Activated T-helper 2 cell treated with anti-CD3 and anti-CD28 coated beads, Interferon-gamma antibody, Interleukin-2, Interleukin-4, amounts not matched to agents 10 μg/mL and 5 μg/mL and 100 μg/mL, durations not matched to agents 14 hours and 24 hours and 36 hours (primary cell): ENCODE measurements at regions of chr18 and their contacts with region 1.

Region 1: DNA sequence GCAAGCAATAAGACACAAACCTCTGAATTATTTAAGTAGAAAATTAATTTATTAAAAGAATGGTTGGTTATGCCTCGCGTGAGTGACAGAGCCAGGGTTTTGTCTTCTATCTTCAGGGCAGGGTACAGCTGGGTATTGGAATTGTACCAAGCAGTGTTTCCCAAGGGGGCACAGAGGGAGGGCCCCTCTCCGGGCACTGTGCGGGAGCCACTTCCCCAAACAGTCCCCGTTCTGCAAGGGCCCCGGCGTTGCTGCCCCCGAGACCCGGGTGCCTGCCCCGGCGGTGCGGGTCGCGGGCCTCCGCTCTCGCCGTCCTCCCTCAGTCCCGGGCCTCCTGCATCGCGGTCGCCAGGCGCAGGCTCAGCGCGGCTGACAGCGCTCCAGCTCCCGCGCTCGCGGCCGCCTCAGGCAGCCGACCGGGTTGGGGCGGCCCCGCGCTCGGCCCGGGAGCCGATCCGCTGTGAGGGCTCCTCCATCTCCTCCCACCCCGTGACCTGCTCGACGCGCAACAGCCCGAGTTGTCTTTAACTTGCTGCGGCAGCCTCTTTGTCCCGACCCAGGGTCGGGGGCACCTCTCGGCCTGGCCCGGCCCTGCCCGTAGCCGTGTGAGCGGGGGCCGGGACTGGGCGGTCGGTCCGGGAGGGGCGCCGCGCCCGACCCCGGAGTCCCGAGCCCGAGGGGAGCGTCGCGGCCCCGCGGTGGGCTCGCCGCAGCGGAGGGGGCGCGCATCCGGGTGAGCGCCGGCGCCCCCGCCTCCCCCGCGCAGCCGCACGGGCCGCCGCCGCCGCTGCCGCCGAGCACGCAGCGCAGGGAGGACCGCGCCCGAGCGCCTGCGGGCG is 620 bp upstream of the GALNT1 start:
- DNase-seq: peak; percentile 43
- H3K4me3 Mint-ChIP-seq: peak overlapping the region; percentile 68
- H3K27ac Mint-ChIP-seq: peak overlapping the region; percentile 51
- H3K4me1 Mint-ChIP-seq: peaks cover 27% of the 10 kb centered on the region
- H3K27me3 Mint-ChIP-seq: peaks cover 22% of the 10 kb centered on the region

Region 2: DNA sequence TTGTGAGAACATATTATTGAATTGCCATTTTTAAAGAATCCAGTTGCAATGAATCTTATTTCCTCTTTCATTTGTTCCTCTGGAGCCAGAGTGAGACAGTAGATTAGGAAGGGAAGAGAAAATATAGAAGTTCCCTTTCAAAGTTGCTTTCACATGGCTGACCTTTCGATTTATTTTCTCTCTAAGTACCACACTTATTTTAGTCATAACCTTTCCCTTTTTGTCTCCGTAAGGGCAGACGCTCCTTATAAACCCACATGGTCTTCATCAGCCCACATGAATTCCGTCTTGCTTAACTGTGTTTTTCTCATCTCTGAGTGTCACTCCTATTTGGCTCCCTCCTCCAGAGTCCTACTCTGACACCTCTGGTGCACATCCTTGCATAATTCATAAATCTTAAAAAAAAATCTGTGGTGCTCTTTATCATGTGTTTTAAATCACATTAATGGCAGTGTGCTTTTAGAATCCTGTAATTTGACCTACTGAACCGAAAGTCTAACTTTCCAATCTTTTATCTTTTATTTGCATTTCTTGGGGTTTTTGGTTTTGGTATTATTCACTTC is 165.3 kb before region 1 on chr18:
- intact Hi-C with region 1: loop called (anchors 5 kb)
- DNase-seq: no peak
- H3K4me3 Mint-ChIP-seq: no peak overlapping the region
- H3K27ac Mint-ChIP-seq: peak overlapping the region; percentile 54
- H3K4me1 Mint-ChIP-seq: peaks cover 20% of the 10 kb centered on the region
- H3K27me3 Mint-ChIP-seq: peaks cover 17% of the 10 kb centered on the region

Region 3: DNA sequence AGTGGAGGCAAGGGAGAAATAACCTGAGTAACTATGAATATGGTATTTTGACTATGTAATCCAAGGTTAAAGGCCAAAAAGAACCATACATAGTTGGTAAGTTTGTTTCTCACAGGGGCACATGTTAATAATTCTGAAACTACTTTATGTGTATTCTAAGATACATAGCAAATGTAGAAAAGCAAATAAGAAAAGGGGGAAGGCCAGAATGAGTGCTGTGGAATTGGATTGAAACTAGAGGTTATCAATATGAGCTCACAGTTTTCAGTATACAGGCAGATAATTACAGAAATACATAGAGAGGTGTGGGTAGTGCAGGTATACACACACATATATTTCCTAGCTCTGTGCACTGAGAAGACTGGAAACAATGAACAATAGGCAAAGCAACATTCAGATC is 96.9 kb before region 1 on chr18:
- intact Hi-C with region 1: loop called (anchors 5 kb)
- DNase-seq: no peak
- H3K4me3 Mint-ChIP-seq: no peak overlapping the region
- H3K27ac Mint-ChIP-seq: no peak overlapping the region
- H3K4me1 Mint-ChIP-seq: peaks cover 14% of the 10 kb centered on the region
- H3K27me3 Mint-ChIP-seq: no peaks in the 10 kb centered on the region

Region 4: GRCh38 chr18:35616664-35617423 is 35.9 kb after region 1 on chr18:
- intact Hi-C with region 1: loop called (anchors 2 kb)
- DNase-seq: peak; percentile 57
- H3K4me3 Mint-ChIP-seq: no peak overlapping the region
- H3K27ac Mint-ChIP-seq: no peak overlapping the region
- H3K4me1 Mint-ChIP-seq: peaks cover 15% of the 10 kb centered on the region
- H3K27me3 Mint-ChIP-seq: no peaks in the 10 kb centered on the region

Region 5: DNA sequence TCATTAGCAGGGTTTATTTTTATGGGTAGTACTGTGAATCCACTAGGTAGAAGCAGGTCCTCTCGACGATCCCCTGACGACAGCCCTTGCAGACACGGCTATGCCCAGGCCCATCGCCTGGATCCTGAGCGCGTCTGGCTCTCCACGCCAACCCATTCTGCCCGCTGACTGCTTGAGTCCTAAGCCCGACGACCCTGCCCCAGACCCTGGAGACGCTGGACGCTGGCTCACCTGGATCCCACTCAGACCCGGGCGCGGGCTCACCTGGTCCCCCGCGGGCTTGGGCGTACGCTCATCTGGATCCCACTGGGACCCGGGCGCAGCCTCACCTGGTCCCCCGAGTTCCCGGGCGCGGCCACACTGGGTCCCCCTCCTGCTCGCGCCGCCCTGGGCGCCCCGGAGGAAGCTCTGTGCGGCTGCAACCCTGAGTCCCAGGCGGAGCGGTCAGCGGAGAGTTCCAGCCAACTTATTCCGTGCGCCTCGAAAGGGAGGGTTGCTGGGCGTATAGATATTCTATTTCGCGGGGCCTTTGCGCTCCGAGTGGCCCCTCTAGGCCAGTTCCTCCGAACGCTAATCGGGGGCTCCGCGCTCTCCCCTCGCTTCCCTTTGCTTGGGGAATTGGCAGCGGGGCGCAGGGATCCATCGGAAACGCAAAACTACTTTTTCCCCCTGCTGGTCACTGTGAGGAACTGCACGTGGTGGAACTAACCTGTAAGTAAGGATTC is 369.1 kb after region 1 on chr18:
- intact Hi-C with region 1: no loop called
- DNase-seq: peak; percentile 33
- H3K4me3 Mint-ChIP-seq: peak overlapping the region; percentile 76
- H3K27ac Mint-ChIP-seq: no peak overlapping the region
- H3K4me1 Mint-ChIP-seq: peaks cover 3% of the 10 kb centered on the region
- H3K27me3 Mint-ChIP-seq: peaks cover 14% of the 10 kb centered on the region